ENCODE measurements at regions of chrX and their contacts with region 1.

Region 1: DNA sequence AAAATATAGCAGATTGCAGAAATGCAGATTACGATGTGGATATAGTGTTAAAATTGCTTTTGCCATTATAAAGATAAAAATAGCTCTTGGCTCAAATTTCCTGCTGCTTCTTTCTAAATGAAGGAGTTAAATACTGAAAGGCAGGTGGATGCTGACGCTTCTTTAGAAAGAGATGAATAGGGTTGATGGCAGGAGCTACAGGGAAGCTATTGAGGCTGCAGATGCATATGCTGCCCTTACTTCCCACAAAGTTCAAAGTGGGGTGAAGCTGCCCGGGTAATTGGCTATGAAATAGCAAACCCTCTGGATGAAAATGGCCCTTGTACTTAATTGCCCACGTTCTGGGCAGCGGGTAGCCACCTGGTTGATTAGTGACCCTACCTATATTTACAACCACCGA is 379.5 kb downstream of the ZIC3 start:
- DNase-seq: no peak
- H3K4me3 ChIP-seq: no peak overlapping the region
- H3K27ac ChIP-seq: no peak overlapping the region
- H3K4me1 ChIP-seq: no peaks in the 10 kb centered on the region
- H3K27me3 ChIP-seq: no peaks in the 10 kb centered on the region
- CTCF ChIP-seq: no peak
- POLR2A ChIP-seq: no peak

Region 2: GRCh38 chrX:137882960-137883359 is 62.5 kb before region 1 on chrX:
- intact Hi-C with region 1: loop called (anchors 10 kb)
- DNase-seq: no peak
- H3K4me3 ChIP-seq: no peak overlapping the region
- H3K27ac ChIP-seq: no peak overlapping the region
- H3K4me1 ChIP-seq: no peaks in the 10 kb centered on the region
- H3K27me3 ChIP-seq: no peaks in the 10 kb centered on the region
- CTCF ChIP-seq: no peak
- POLR2A ChIP-seq: no peak

Region 3: DNA sequence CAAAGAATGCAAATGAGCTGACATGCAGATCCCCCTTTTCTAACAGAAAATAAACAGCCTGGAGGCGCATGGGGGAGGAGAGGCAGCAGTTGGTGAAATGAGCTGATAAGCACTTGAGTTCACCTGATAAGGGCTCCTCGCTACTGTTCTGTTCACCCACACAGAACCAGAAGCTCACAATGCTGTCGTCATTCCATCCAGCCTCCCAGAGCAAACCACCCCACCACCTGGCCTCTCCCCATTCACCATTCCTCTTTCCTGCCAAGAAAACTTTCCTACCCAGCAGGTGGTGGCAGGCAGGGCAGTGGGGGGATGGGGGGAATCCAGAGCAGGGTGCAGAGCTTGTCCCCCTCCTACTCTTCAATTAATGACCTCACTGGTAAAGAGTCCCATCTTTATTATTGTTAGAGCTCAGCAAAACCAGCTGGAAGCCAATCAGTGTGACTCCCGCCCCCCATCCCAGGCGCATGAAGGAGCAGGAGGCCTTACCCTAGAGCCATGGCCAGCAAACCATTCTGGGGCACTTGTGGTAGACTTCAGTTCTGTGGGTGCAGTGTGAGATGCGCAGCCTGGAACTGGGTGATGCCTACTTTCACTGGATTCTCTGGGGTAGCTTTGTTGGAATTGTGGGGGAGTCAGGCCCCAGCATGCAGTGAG is 29.3 kb before region 1 on chrX:
- intact Hi-C with region 1: no loop called
- DNase-seq: no peak
- H3K4me3 ChIP-seq: no peak overlapping the region
- H3K27ac ChIP-seq: no peak overlapping the region
- H3K4me1 ChIP-seq: no peaks in the 10 kb centered on the region
- H3K27me3 ChIP-seq: no peaks in the 10 kb centered on the region
- CTCF ChIP-seq: no peak
- POLR2A ChIP-seq: no peak

Region 4: GRCh38 chrX:138011468-138011867 is 66.0 kb after region 1 on chrX:
- intact Hi-C with region 1: no loop called
- DNase-seq: no peak
- H3K4me3 ChIP-seq: no peak overlapping the region
- H3K27ac ChIP-seq: no peak overlapping the region
- H3K4me1 ChIP-seq: no peaks in the 10 kb centered on the region
- H3K27me3 ChIP-seq: no peaks in the 10 kb centered on the region
- CTCF ChIP-seq: no peak
- POLR2A ChIP-seq: no peak

Measured in uterus (tissue), 4 donors.